ENCODE measurements at regions of chr1 and their contacts with region 1.

Region 1: DNA sequence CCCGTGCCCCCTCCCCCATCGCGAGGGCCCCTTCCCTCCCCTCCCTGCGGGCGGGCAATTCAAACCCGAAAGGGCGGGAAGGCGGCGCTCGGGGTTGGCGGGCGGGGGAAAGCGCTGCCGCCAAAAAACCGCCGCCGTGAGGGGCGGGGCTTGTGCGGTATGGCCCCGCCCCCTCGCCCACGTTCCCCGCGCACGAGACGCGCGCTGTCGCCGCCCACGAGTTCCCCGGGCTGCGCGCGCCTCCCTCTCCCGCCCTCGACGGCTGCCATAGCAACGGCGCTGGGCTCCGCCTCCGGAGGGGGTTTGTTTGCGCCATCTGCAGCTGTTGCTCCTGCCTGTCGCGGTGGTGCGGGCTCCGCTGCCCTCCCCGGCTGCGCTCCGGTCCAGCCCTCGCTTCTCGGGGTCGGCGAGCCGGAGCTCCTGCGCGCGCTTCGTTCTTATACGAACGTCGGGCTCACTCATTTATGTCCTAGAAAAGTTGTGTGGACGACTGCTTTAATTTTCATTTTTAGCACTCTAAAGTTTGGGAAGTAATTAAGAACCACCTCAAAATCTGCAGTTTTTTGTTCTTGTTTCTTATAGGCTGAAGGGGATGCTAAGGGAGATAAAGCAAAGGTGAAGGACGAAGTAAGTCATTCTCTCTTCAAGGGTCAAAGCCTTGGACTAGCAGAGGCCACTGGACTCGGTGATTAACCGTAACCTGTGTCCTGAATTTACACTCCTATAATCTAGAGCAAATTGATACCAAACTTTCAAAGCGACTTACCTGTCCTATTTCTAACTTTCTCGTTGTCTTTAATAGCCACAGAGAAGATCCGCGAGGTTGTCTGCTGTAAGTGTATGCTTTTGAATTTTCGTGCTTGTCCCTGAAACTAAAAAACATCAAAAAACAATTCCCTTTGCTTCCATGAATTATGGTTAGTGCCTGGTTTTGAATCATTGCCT is 933 bp downstream of the HMGN2 start:
- DNase-seq: peak; percentile 92
- H3K4me3 Mint-ChIP-seq: peak overlapping the region; percentile 90
- H3K27ac Mint-ChIP-seq: peak overlapping the region; percentile 42
- H3K4me1 Mint-ChIP-seq: peaks cover 47% of the 10 kb centered on the region
- H3K27me3 Mint-ChIP-seq: no peaks in the 10 kb centered on the region

Region 2: DNA sequence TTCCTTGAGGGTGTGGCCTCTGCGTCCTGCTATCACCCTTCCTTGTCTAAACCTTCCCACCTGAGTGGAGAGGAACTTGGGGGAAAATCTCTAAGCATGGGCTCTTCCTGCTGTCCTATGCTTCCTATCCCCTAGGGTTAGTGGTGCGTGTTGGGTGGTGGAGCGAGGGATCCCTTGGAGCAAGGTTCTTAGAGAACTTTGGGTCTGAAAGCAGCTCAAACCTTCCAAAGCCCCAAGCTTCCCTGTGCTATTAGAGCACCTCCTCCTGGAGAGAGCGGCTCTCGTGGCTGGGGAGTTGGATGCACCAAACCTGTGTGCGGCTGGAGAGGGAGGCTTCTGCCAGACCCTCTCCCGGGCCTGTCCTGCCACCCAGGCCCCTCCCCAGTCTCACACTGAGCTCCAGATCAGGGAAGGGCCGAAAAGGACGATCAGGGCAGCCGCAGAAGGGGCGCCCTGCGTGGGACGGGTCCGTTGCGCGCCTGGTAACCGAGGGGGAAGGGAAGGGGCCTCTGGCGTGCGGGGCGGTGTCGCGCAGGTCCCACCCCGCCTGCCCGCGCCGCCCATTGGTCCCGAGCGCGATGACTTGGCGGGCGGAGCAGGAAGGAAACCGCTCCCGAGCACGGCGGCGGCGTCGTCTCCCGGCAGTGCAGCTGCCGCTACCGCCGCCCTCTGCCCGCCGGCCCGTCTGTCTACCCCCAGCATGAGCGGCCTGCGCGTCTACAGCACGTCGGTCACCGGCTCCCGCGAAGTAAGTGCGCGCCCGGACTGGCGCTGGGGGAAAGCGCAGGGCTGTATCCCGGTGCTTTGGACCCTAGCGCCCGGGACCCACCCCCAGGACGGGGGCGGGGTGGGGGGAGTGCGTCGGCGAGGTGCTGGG is 193.5 kb before region 1 on chr1 and contains the start of gene SH3BGRL3:
- intact Hi-C with region 1: loop called (anchors 5 kb)
- DNase-seq: peak; percentile 84
- H3K4me3 Mint-ChIP-seq: peak within 1 kb of the TSS; percentile 93
- H3K27ac Mint-ChIP-seq: peak within 1 kb of the TSS; percentile 97
- H3K4me1 Mint-ChIP-seq: peaks cover 76% of the 10 kb centered on the region
- H3K27me3 Mint-ChIP-seq: no peaks in the 10 kb centered on the region
- total RNA-seq, gene SH3BGRL3: 437 TPM in 2 replicates

Region 3: GRCh38 chr1:26417111-26417759 is 55.9 kb before region 1 on chr1:
- intact Hi-C with region 1: no loop called
- DNase-seq: peak; percentile 75
- H3K4me3 Mint-ChIP-seq: no peak overlapping the region
- H3K27ac Mint-ChIP-seq: no peak overlapping the region
- H3K4me1 Mint-ChIP-seq: no peaks in the 10 kb centered on the region
- H3K27me3 Mint-ChIP-seq: peaks cover 61% of the 10 kb centered on the region

Region 4: GRCh38 chr1:26431979-26432695 is 41.0 kb before region 1 on chr1 and contains the start of gene DHDDS:
- intact Hi-C with region 1: loop called (anchors 1 kb)
- DNase-seq: peak; percentile 98
- H3K4me3 Mint-ChIP-seq: peak within 1 kb of the TSS; percentile 93
- H3K27ac Mint-ChIP-seq: peak within 1 kb of the TSS; percentile 88
- H3K4me1 Mint-ChIP-seq: peaks cover 14% of the 10 kb centered on the region
- H3K27me3 Mint-ChIP-seq: peaks cover 5% of the 10 kb centered on the region
- total RNA-seq, gene DHDDS: 56.2 and 57.3 TPM in 2 replicates

Region 5: DNA sequence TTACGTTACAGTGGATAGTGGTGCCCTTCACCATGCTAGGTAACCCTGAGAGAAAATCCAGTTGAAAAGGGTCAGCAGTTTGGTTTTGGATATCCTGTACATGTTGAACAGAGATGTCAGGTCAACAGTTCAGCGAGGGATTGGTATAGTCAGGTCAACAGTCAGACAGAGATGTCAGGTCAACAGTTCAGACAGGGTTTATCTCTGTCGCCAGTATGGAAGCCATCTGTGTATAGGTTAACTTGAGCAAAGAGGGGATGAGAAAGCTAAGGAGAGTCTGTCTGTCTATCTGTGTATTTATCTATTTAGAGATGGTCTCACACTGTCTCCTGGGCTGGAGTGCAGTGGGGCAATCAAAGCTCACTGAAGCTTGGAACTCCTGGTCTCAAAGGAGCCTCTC is 23.3 kb before region 1 on chr1:
- intact Hi-C with region 1: no loop called
- DNase-seq: no peak
- H3K4me3 Mint-ChIP-seq: no peak overlapping the region
- H3K27ac Mint-ChIP-seq: no peak overlapping the region
- H3K4me1 Mint-ChIP-seq: no peaks in the 10 kb centered on the region
- H3K27me3 Mint-ChIP-seq: no peaks in the 10 kb centered on the region

Region 6: GRCh38 chr1:26500488-26501175 is 27.5 kb after region 1 on chr1:
- intact Hi-C with region 1: loop called (anchors 1 kb)
- DNase-seq: peak; percentile 85
- H3K4me3 Mint-ChIP-seq: peak overlapping the region; percentile 87
- H3K27ac Mint-ChIP-seq: peak overlapping the region; percentile 89
- H3K4me1 Mint-ChIP-seq: peaks cover 21% of the 10 kb centered on the region
- H3K27me3 Mint-ChIP-seq: no peaks in the 10 kb centered on the region

Region 7: DNA sequence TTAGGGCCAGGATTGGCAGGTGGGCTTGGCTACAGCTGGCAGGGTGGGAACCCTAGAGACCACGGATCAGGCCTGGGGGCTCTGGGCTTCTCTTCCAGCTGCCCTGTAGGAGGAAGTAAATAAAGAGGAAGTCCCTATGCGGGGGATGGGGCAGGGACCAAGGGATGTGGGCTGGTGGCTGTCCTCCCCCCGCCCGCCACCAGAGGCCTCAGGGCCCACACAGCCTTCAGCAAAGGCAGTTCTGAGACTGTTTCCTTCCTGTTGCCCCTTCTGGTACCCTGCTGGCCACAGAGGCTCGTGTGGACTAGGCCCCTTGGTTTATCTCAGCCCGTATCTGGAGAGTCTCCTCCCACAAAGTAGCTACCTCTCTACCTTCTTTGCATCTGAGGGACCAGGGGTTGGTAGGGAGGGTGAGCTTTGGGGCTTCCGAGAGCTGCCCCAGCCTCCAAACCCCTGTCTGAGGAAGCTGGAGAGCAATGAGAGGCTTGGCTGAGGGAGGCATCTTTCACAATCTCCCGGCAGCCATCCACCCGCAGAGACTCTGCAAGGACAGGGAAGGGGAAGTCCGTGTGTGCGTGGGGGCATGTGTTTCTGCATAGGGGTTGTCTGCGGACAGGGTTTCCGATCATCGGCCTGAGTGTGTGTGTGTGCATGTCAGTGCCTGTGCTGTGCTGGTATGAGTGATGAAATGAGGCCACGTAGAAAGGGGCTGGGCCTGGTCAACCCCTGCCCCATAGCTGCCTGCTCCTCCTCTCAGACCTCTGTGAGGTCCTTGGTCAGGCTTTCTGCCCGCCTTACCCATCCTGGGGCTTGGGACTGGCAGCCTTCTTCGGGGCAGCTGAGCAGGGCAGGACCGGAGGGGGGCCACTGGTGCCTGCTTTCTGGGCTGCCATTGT is 68.9 kb after region 1 on chr1:
- intact Hi-C with region 1: loop called (anchors 2 kb)
- DNase-seq: peak; percentile 73
- H3K4me3 Mint-ChIP-seq: peak overlapping the region; percentile 77
- H3K27ac Mint-ChIP-seq: peak overlapping the region; percentile 97
- H3K4me1 Mint-ChIP-seq: peaks cover 67% of the 10 kb centered on the region
- H3K27me3 Mint-ChIP-seq: no peaks in the 10 kb centered on the region

Region 8: DNA sequence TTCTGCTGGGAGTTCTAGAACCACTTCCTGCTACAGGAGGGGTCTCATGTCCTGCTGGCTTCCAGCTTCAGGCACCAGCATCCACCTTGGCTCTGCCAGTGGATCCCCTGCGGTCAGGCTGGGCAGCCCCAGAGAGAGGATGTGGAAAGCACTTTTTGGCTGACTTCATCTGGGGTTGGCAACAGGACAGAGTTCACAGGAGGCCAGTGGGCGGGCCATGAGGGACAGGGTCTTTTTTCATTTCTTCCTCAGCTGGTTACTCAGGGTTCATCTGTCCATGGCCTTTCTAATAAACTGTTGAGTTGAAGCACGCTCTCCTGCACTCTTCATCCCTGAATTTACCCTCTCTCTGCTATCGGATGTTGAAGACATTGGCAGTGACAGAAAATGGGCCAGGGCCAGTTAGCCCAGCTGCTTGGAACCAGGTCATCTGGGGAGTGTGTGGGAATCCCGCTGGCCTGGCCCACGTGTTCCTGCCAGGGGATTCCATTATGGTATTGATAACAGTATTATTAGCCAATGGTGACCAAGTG is 101.6 kb after region 1 on chr1:
- intact Hi-C with region 1: no loop called
- DNase-seq: no peak
- H3K4me3 Mint-ChIP-seq: no peak overlapping the region
- H3K27ac Mint-ChIP-seq: peak overlapping the region; percentile 82
- H3K4me1 Mint-ChIP-seq: peaks cover 42% of the 10 kb centered on the region
- H3K27me3 Mint-ChIP-seq: no peaks in the 10 kb centered on the region

Region 9: GRCh38 chr1:26695356-26696118 is 222.4 kb after region 1 on chr1 and contains the start of gene ARID1A:
- intact Hi-C with region 1: loop called (anchors 5 kb)
- DNase-seq: peak; percentile 97
- H3K4me3 Mint-ChIP-seq: peak within 1 kb of the TSS; percentile 88
- H3K27ac Mint-ChIP-seq: peak within 1 kb of the TSS; percentile 98
- H3K4me1 Mint-ChIP-seq: peaks cover 27% of the 10 kb centered on the region
- H3K27me3 Mint-ChIP-seq: no peaks in the 10 kb centered on the region
- total RNA-seq, gene ARID1A: 109 TPM in 2 replicates